GM12878 (cell line): ENCODE measurements at regions of chr2 and their contacts with region 1.

Region 1: DNA sequence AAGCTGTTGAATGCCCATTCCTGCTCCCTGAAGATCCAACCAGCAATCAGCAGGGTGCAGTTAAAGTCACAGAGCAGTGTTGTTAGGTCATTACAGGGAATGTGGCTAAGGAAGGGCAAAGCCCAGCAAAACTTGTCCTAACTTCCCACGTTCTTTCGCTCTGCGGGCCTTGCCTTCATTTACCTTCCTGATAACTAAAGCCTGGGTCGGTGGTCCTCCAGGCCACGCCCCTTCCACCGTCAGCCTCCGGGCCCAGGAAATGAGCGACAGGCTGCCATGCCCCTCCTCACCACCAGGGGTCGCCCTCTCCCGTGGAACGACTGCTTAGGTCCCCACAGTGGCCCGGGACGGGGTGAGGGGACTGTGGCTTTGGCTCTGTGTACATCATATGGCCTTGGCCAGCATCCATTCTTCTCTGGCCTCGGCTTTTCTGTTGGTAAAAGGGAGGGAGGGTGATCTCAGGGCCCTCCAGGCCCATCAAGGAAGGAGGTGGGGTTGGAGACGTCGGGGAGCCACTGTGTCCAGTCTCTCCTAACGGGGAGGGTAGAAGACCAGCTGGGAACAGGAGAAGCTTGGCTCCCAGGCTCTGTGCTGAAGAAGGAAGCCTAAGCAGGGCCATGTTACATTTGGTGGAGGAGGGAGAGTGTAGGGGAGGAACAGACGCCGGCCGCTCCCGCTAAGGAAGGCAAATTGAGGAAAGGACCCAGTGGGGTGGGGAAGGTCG is 2.2 kb downstream of the SH2D6 start:
- DNase-seq: no peak
- ATAC-seq: peak; percentile 82
- H3K4me3 ChIP-seq: no peak overlapping the region
- H3K27ac ChIP-seq: no peak overlapping the region
- H3K4me1 ChIP-seq: peaks cover 8% of the 10 kb centered on the region
- H3K27me3 ChIP-seq: no peaks in the 10 kb centered on the region
- CTCF ChIP-seq: peak; percentile 99; a peak in 5 of 6 replicates
- EP300 ChIP-seq: no peak
- POLR2A ChIP-seq: peak; percentile 33; the same call in 1 of the 2 replicates
- RAD21 ChIP-seq: peak; percentile 98

Region 2: DNA sequence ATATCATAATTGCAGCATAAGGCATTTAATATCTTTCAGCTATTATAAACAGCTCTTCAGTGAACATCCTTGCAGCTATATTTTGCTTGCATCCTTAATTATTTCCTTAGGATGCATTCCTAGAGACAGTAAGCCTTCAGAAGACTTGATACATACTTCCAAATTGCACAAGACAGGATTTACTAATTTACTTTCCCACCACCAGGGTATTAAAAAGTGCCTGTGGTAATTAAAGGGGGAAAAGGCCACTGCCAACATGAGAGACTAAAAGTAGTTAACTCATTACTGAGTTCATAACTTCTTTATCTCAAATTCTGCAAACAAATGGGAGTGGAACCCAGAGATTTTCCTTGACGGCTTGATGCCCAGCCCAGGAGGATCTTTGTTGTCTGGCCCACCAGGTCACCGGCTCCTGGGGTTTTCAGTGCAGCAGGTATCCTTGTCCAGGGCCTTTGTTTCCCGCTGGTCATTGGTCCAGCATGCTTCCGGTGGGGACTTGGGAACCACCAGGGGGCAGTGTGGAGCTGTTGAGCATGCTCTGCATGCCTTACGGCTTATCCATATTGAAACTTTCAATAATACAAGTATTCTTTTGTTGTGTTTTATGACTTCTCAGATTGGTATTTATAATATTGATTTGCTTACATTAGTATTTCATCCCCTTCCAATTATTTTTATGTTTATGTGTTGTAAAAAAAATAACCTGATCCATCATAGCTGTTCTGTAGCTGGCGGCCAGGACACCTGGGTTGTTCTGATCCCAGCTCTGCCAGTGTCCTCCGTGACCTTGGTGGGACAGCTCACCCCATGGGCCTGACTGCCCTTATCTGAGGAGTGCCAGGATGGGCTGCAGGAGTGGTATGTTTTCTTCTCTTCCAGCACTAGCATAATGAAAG is 154.3 kb before region 1 on chr2:
- CTCF ChIA-PET with region 1: no interaction called
- POLR2A ChIA-PET with region 1: no interaction called
- RAD21 ChIA-PET with region 1: no interaction called
- SMC1A ChIA-PET with region 1: no interaction called
- in situ Hi-C with region 1: no loop called
- intact Hi-C with region 1: no loop called
- DNase-seq: no peak
- ATAC-seq: peak; percentile 98
- H3K4me3 ChIP-seq: no peak overlapping the region
- H3K27ac ChIP-seq: no peak overlapping the region
- H3K4me1 ChIP-seq: no peaks in the 10 kb centered on the region
- H3K27me3 ChIP-seq: peaks cover 1 to 4% of the 10 kb centered on the region in 2 experiments; a peak in 1 of 4 replicates
- CTCF ChIP-seq: peak; percentile 81 to 86 (median 84)
- EP300 ChIP-seq: no peak
- POLR2A ChIP-seq: no peak
- RAD21 ChIP-seq: peak; percentile 51

Region 3: DNA sequence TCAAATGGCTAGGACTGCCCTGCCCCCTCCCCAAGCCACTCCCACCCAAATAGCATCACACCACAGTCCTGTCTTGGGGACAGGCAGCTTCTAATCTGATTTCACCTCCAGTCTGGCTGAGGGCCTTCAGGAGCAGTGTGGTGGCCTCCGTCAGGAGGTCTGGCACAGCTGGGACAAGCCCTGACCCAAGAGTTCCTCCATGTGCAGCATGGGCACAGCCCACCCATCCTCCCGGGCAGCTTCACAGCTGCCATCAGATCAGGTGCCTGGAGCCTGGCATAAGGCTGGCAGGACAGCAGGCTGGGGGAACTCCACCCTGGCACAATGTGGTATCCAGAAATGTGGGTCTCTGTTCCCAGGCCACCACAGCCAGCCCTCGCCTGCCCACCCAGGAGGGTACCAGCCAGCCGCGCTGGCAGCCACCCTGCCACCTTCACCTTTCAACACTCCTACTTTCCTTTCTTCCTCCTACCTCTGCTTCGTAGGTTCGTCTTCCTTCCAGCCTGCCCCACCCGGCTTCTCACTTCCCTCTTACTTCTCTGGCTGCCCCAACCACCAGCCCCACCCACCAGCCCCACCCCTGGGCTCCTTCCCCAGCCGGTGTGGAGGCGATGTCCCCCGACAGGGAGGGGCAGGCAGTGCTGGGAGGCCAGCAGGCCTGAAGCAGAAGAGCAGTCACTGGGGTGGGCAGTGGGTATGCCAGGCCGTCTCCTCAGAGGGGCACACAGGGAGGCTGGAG is 10.7 kb before region 1 on chr2 and contains the start of gene CAPG:
- CTCF ChIA-PET with region 1: interaction called, 18 read pairs
- POLR2A ChIA-PET with region 1: interaction called, 3 read pairs
- RAD21 ChIA-PET with region 1: interaction called, 10 read pairs
- SMC1A ChIA-PET with region 1: interaction called, 10 read pairs
- in situ Hi-C with region 1: no loop called
- intact Hi-C with region 1: no loop called
- DNase-seq: no peak
- ATAC-seq: peak; percentile 90
- H3K4me3 ChIP-seq: peak within 1 kb of the TSS; percentile 64; the same call in 1 of the 2 replicates
- H3K27ac ChIP-seq: peak within 1 kb of the TSS; percentile 55
- H3K4me1 ChIP-seq: peaks cover 26% of the 10 kb centered on the region
- H3K27me3 ChIP-seq: no peaks in the 10 kb centered on the region
- CTCF ChIP-seq: no peak
- EP300 ChIP-seq: no peak
- POLR2A ChIP-seq: no peak
- RAD21 ChIP-seq: no peak
- polyA plus RNA-seq, gene CAPG: 26.3 to 65.6 TPM

Region 4: DNA sequence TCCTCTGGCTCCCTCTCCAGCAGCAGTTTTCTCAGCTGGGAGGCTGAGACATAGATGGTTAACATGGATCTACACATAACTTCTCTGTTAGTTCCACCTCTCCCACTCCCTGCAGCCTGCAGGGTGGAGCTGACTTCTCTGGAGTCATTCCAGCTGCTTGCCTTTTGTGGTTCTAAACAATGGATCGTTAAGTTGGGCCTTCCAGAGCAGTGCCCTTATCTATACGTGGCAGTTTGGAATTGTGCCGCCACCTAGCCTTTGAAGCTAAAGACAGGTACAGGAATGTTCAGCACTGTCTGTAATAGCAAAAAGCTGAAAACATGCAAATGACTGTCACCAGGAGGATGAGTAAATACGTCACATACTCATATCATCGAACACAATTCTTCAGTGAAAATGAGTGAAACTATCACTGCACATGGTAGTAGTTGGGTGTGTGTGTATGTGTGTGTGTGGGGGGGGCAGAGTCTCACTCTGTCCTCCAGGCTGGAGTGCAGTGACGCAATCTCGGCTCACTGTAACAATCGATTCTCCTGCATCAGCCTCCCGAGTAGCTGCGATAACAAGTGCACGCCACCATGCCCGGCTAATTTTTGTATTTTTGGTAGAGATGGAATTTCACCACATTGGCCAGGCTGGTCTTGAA is 48.1 kb after region 1 on chr2:
- CTCF ChIA-PET with region 1: interaction called, 10 read pairs
- POLR2A ChIA-PET with region 1: no interaction called
- RAD21 ChIA-PET with region 1: no interaction called
- SMC1A ChIA-PET with region 1: no interaction called
- in situ Hi-C with region 1: no loop called
- intact Hi-C with region 1: no loop called
- DNase-seq: no peak
- ATAC-seq: no peak; the same call in 2 of the 3 replicates
- H3K4me3 ChIP-seq: no peak overlapping the region
- H3K27ac ChIP-seq: no peak overlapping the region
- H3K4me1 ChIP-seq: no peaks in the 10 kb centered on the region
- H3K27me3 ChIP-seq: 0 out of 4 replicates have a peak, but pooled peaks cover 0 to 2% of the 10 kb centered on the region in 2 experiments
- CTCF ChIP-seq: no peak
- EP300 ChIP-seq: no peak
- POLR2A ChIP-seq: no peak
- RAD21 ChIP-seq: no peak

Region 5: DNA sequence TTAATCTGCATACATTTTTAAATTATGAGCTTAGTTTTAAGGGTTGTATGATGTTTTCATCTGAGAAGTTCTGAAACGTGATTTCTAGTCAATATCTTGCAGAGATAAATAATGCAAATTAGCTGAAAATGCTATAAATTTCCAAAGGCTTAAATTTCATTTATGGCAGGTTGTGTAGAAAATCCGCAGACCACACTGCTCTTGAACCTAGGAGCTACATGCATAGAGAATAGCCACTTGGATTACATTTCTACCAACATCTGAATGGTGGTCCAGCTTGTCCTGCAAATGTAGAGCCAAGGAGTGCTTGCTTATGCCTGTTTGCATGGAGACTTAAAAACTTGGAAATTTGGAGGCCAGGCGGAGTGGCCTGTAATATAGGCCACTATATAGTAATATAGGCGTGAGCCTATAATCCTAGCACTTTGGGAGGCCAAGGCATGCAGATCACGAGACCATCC is 125.1 kb after region 1 on chr2:
- CTCF ChIA-PET with region 1: interaction called, 336 read pairs
- POLR2A ChIA-PET with region 1: interaction called, 17 read pairs
- RAD21 ChIA-PET with region 1: interaction called, 179 read pairs
- SMC1A ChIA-PET with region 1: interaction called, 201 read pairs
- in situ Hi-C with region 1: no loop called
- intact Hi-C with region 1: no loop called
- DNase-seq: no peak
- ATAC-seq: no peak; the same call in 1 of the 3 replicates
- H3K4me3 ChIP-seq: no peak overlapping the region
- H3K27ac ChIP-seq: no peak overlapping the region
- H3K4me1 ChIP-seq: no peaks in the 10 kb centered on the region
- H3K27me3 ChIP-seq: no peaks in the 10 kb centered on the region
- CTCF ChIP-seq: no peak
- EP300 ChIP-seq: no peak
- POLR2A ChIP-seq: no peak
- RAD21 ChIP-seq: no peak

Region 6: GRCh38 chr2:85561317-85561979 is 140.8 kb after region 1 on chr2 and contains the start of gene GGCX:
- CTCF ChIA-PET with region 1: interaction called, 336 read pairs
- POLR2A ChIA-PET with region 1: interaction called, 7 read pairs
- RAD21 ChIA-PET with region 1: interaction called, 16 read pairs
- SMC1A ChIA-PET with region 1: interaction called, 22 read pairs
- in situ Hi-C with region 1: loop called (anchors 5 kb)
- intact Hi-C with region 1: no loop called
- DNase-seq: peak; percentile 73
- ATAC-seq: peak; percentile 97
- H3K4me3 ChIP-seq: peak within 1 kb of the TSS; percentile 98
- H3K27ac ChIP-seq: peak within 1 kb of the TSS; percentile 71
- H3K4me1 ChIP-seq: no peaks in the 10 kb centered on the region; the same call in 1 of the 2 replicates
- H3K27me3 ChIP-seq: no peaks in the 10 kb centered on the region
- CTCF ChIP-seq: no peak
- EP300 ChIP-seq: 0 out of 4 replicates have a peak, but pooled peaks of 1 of the 2 experiments have one; percentile 14
- POLR2A ChIP-seq: peak; percentile 97
- RAD21 ChIP-seq: no peak
- polyA plus RNA-seq, gene GGCX: 46.6 to 52.7 TPM

Region 7: DNA sequence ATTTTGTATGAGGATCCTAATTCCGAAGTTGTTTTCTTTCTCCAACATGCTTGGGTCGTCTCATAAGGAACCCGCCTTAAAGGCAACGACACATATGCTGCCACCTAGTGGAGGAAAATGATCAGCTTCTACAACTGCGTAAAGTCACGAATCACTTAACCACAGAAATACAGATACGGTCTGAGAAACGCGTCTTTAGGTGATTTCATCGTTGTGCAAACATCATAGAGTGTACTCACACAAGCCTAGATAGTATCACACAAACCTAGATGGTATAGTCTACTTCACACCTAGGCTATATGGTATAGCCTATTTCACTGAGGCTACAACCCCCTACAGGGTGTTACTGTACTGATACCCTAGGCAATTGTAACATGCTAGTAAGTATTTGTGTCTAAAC is 286.6 kb after region 1 on chr2:
- CTCF ChIA-PET with region 1: interaction called, 8 read pairs
- POLR2A ChIA-PET with region 1: interaction called, 4 read pairs
- RAD21 ChIA-PET with region 1: interaction called, 3 read pairs
- SMC1A ChIA-PET with region 1: interaction called, 4 read pairs
- in situ Hi-C with region 1: no loop called
- intact Hi-C with region 1: loop called (anchors 5 kb)
- DNase-seq: peak; percentile 75
- ATAC-seq: peak; percentile 79
- H3K4me3 ChIP-seq: no peak overlapping the region
- H3K27ac ChIP-seq: no peak overlapping the region
- H3K4me1 ChIP-seq: peaks cover 21% of the 10 kb centered on the region
- H3K27me3 ChIP-seq: no peaks in the 10 kb centered on the region
- CTCF ChIP-seq: peak; percentile 74 to 83 (median 82)
- EP300 ChIP-seq: 0 out of 4 replicates have a peak, but pooled peaks of 1 of the 2 experiments have one; percentile 34
- POLR2A ChIP-seq: no peak
- RAD21 ChIP-seq: peak; percentile 77